IMR-90 (cell line): ENCODE measurements at regions of chr17 and their contacts with region 1.

Region 1: GRCh38 chr17:81386649-81387099 is 8.6 kb upstream of the BAHCC1 start:
- DNase-seq: no peak
- ATAC-seq: peak; percentile 65
- H3K4me3 ChIP-seq: peak overlapping the region; percentile 59
- H3K27ac ChIP-seq: peak overlapping the region; percentile 88
- H3K4me1 ChIP-seq: peaks cover 13% of the 10 kb centered on the region; the same call in 1 of the 2 replicates
- H3K27me3 ChIP-seq: no peaks in the 10 kb centered on the region
- CTCF ChIP-seq: no peak
- POLR2A ChIP-seq: no peak
- RAD21 ChIP-seq: no peak

Region 2: GRCh38 chr17:81519284-81519955 is 132.7 kb after region 1 on chr17:
- CTCF ChIA-PET with region 1: no interaction called
- POLR2A ChIA-PET with region 1: interaction called, 11 read pairs
- dilution Hi-C with region 1: no loop called
- in situ Hi-C with region 1: no loop called
- intact Hi-C with region 1: no loop called
- DNase-seq: no peak
- ATAC-seq: no peak
- H3K4me3 ChIP-seq: peak overlapping the region; percentile 33
- H3K27ac ChIP-seq: no peak overlapping the region; the same call in 1 of the 2 replicates
- H3K4me1 ChIP-seq: peaks cover 37% of the 10 kb centered on the region
- H3K27me3 ChIP-seq: no peaks in the 10 kb centered on the region
- CTCF ChIP-seq: peak; percentile 31; the same call in 1 of the 2 replicates
- POLR2A ChIP-seq: no peak
- RAD21 ChIP-seq: no peak

Region 3: GRCh38 chr17:81537343-81537855 is 150.7 kb after region 1 on chr17:
- CTCF ChIA-PET with region 1: no interaction called
- POLR2A ChIA-PET with region 1: no interaction called
- dilution Hi-C with region 1: no loop called
- in situ Hi-C with region 1: no loop called
- intact Hi-C with region 1: no loop called
- DNase-seq: no peak
- ATAC-seq: peak; percentile 11
- H3K4me3 ChIP-seq: no peak overlapping the region
- H3K27ac ChIP-seq: no peak overlapping the region
- H3K4me1 ChIP-seq: no peaks in the 10 kb centered on the region
- H3K27me3 ChIP-seq: peaks cover 10% of the 10 kb centered on the region; the same call in 1 of the 2 replicates
- CTCF ChIP-seq: peak; percentile 49
- POLR2A ChIP-seq: no peak
- RAD21 ChIP-seq: peak; percentile 48